Panc1 (cell line): ENCODE measurements at regions of chr11 and their contacts with region 1.

Region 1: GRCh38 chr11:63882555-63883242 is 34.3 kb downstream of the RCOR2 start:
- DNase-seq: no peak
- ATAC-seq: no peak
- H3K4me3 ChIP-seq: no peak overlapping the region
- H3K27ac ChIP-seq: no peak overlapping the region
- H3K4me1 ChIP-seq: peaks cover 15% of the 10 kb centered on the region
- H3K27me3 ChIP-seq: no peaks in the 10 kb centered on the region
- CTCF ChIP-seq: no peak

Region 2: DNA sequence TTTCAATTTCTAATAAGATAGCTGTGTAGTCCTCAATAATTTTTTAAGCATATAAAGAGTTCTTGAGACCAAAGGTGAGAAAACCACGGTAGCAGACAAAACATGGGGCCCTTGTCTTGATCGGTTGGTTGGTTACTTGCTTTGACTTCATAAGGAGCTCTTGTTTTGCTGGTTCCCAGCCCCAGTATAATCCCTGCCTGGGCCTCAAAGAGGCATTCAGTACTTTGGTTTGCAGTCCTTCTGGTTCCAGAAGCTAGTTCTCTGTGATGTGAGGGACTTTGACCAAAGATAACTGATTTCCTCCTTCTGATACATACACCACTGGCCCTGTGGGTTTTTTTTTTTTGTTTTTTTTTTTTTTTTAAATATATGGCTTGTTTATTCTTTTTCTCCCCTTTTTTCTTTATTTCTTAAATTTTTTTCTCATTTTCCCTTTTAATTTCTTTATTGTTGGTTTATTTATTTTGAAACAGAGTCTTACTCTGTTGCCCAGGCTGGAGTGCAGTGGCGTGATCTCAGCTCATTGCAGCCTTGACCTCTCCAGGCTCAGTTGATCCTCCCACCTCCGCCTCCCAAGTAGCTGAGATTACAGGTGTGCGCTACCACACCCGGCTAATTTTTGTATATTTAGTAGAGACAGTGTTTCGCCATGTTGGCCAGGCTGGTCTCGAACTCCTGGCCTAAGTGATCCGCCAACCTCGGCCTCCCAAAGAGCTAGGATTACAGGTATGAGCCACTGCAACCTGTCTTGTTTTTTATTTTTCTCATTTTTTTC is 26.5 kb before region 1 on chr11:
- CTCF ChIA-PET with region 1: no interaction called
- POLR2A ChIA-PET with region 1: interaction called, 12 read pairs
- in situ Hi-C with region 1: no loop called
- intact Hi-C with region 1: no loop called
- DNase-seq: no peak
- ATAC-seq: no peak
- H3K4me3 ChIP-seq: no peak overlapping the region
- H3K27ac ChIP-seq: no peak overlapping the region
- H3K4me1 ChIP-seq: no peaks in the 10 kb centered on the region
- H3K27me3 ChIP-seq: no peaks in the 10 kb centered on the region
- CTCF ChIP-seq: no peak

Region 3: DNA sequence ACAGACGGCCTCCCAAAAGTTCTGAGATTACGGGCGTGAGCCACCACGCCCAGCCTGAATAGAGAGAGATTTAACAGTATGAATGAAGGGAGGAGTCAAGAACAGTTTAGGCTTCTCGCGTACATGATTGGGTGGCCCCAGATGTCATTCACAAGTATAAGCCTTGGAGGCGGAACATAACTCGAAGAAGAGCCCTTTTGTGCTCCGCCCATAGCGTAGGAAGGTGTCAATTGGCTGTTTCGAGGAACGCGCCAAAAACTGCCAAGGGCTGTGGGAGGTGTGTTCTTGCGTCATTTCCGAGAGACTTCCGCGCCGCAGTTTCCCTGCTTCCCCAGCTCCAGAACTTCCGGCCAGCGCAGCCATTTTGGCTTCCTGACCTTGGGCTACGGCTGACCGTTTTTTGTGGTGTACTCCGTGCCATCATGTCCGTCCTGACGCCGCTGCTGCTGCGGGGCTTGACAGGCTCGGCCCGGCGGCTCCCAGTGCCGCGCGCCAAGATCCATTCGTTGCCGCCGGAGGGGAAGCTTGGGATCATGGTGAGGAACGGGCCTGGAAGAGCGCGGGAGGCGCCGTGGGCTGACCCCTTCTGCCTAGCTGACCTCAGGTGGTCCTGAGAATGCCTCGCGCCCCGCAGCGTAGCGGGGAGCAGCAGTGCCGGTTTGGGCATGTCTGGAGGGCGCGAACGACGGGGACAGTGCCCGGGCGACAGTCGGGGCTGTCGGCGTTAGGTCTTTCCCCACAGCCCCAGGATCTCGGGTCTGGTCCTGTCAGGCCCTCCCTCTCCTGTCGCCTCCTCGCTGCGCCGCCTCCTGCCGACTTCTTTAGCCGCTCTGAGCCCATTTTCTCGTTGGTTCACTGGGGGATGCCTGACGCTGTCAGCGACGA is 91.8 kb after region 1 on chr11 and contains the start of gene COX8A:
- CTCF ChIA-PET with region 1: no interaction called
- POLR2A ChIA-PET with region 1: no interaction called
- in situ Hi-C with region 1: no loop called
- intact Hi-C with region 1: no loop called
- DNase-seq: peak; percentile 96
- ATAC-seq: peak; percentile 96
- H3K4me3 ChIP-seq: peak within 1 kb of the TSS; percentile 84 to 85
- H3K27ac ChIP-seq: peak within 1 kb of the TSS; percentile 95
- H3K4me1 ChIP-seq: peaks cover 10% of the 10 kb centered on the region
- H3K27me3 ChIP-seq: no peaks in the 10 kb centered on the region
- CTCF ChIP-seq: no peak
- total RNA-seq, gene COX8A: 613 TPM